Mammary epithelial cell (primary cell): ENCODE measurements at regions of chr4 and their contacts with region 1.

Region 1: DNA sequence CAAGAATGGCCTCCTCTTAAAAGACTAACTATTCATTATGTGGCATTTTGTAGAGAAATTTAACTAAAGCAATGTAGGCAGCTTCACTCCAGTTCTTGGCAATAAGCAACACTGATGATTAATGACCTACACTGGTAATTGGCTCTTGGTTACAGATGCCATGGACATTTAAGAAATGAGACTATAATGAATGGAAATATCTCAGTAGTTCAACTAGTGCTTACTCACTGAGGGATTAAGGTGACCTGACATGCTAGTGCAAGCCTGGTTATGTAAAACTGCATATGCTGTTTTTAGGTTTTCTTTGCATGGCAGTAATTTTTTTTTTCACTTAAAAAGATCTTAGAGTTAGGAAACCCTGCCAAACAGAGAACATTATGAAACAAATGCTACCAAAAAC is 152.7 kb upstream of the AADAT start:
- DNase-seq: peak; percentile 84
- H3K4me3 ChIP-seq: no peak overlapping the region
- H3K27ac ChIP-seq: peak overlapping the region; percentile 64
- H3K4me1 ChIP-seq: peaks cover 46% of the 10 kb centered on the region
- H3K27me3 ChIP-seq: no peaks in the 10 kb centered on the region
- CTCF ChIP-seq: no peak

Region 2: GRCh38 chr4:170229006-170229405 is 13.5 kb before region 1 on chr4:
- CTCF ChIA-PET with region 1: no interaction called
- dilution Hi-C with region 1: no loop called
- in situ Hi-C with region 1: no loop called
- intact Hi-C with region 1: loop called (anchors 1 kb)
- DNase-seq: peak; percentile 73
- H3K4me3 ChIP-seq: no peak overlapping the region
- H3K27ac ChIP-seq: no peak overlapping the region
- H3K4me1 ChIP-seq: peaks cover 14% of the 10 kb centered on the region
- H3K27me3 ChIP-seq: no peaks in the 10 kb centered on the region
- CTCF ChIP-seq: no peak